Activated T-helper 1 cell treated with anti-CD3 and anti-CD28 coated beads, Interleukin-12 subunit alpha, Interleukin-12 subunit beta, Interleukin-2, Interleukin-4 antibody, amounts not matched to agents 30 ng/mL and 10 ng/mL and 1 ng/mL, durations not matched to agents 14 hours and 24 hours and 36 hours (primary cell): ENCODE measurements at regions of chr3 and their contacts with region 1.

Region 1: DNA sequence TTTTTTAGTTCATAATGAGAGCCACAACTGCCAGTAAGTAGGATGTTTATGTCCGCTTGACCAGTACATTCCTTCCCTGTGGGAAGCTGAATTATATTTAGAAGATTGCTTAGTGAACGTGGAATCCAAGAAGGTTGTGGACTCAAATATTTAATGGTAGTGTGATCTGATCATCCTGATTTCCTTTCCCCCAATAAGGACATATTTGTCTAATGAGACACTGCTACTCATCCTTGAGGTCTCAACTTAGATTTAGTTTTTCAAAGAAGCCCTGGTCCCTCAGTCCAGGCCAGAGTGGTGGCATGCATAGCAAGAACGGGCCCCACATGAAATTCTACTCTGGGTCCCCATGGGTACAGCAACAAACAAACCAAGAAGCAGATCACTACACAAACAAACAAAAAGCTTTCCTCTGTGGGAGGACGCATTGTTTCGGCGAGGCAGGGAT is 60.8 kb downstream of the USP13 start:
- DNase-seq: no peak
- H3K4me3 Mint-ChIP-seq: no peak overlapping the region
- H3K27ac Mint-ChIP-seq: no peak overlapping the region
- H3K4me1 Mint-ChIP-seq: no peaks in the 10 kb centered on the region
- H3K27me3 Mint-ChIP-seq: no peaks in the 10 kb centered on the region

Region 2: DNA sequence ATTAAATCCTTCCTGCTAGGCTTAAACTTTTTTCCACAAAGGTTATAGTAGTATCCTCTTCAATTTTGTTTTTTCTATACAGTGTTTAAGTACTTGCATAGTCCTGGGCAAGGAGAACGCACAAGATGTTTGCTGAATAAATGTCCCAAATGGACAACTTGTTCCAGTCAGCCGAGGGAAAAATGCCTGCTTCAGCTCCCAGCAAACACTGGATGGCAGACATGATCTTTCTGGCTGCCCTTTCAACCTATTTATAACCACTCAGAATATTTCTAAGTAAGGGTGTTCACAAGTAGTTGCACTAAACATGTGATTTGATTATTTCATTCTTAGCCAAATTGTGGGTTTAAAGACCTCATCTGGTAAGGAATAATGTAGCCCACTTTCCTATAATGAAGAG is 292.2 kb before region 1 on chr3:
- intact Hi-C with region 1: no loop called
- DNase-seq: no peak
- H3K4me3 Mint-ChIP-seq: no peak overlapping the region
- H3K27ac Mint-ChIP-seq: no peak overlapping the region
- H3K4me1 Mint-ChIP-seq: no peaks in the 10 kb centered on the region
- H3K27me3 Mint-ChIP-seq: no peaks in the 10 kb centered on the region

Region 3: GRCh38 chr3:179700705-179701104 is 13.0 kb before region 1 on chr3:
- intact Hi-C with region 1: loop called (anchors 1 kb)
- DNase-seq: no peak
- H3K4me3 Mint-ChIP-seq: no peak overlapping the region
- H3K27ac Mint-ChIP-seq: no peak overlapping the region
- H3K4me1 Mint-ChIP-seq: peaks cover 12% of the 10 kb centered on the region
- H3K27me3 Mint-ChIP-seq: no peaks in the 10 kb centered on the region

Region 4: GRCh38 chr3:179760944-179761343 is 47.3 kb after region 1 on chr3:
- intact Hi-C with region 1: no loop called
- DNase-seq: no peak
- H3K4me3 Mint-ChIP-seq: no peak overlapping the region
- H3K27ac Mint-ChIP-seq: no peak overlapping the region
- H3K4me1 Mint-ChIP-seq: no peaks in the 10 kb centered on the region
- H3K27me3 Mint-ChIP-seq: no peaks in the 10 kb centered on the region

Region 5: DNA sequence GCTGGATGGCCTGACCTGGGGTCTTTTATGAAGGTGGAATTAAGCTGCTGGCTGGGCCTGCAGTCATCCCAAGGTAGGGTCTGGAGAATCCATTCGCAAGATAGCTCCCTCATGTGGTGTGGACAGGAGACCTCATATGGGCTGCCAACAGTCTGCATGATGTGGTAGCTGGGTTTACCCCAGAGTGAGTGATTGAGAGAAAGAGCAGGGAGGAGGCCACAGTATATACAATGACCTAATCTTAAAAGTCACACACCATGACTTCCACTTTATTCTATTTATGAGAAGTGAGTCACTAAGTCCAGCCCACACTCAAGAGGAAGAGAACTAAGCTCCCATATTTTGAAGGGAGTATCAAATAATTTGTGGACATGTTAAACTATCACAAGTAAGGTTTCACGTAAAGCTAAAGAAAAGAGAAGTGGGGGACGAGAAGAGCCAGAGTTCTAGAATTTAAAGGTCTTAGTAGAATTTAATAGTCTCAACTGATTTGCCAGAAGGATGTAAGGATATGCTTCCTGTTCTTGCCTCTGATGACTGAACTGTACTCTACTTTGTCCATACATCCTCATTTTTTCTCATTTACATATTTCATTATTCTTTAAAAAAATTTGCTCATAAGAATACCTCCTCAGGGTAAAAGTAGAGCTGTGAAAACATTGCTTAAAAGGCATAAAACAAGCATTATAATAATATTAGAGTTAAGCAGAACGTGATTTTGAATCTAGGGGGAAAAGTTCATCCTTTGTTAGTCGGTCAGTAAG is 138.7 kb after region 1 on chr3:
- intact Hi-C with region 1: no loop called
- DNase-seq: no peak
- H3K4me3 Mint-ChIP-seq: no peak overlapping the region
- H3K27ac Mint-ChIP-seq: no peak overlapping the region
- H3K4me1 Mint-ChIP-seq: no peaks in the 10 kb centered on the region
- H3K27me3 Mint-ChIP-seq: peaks cover 4% of the 10 kb centered on the region

Region 6: GRCh38 chr3:180063810-180064209 is 350.1 kb after region 1 on chr3:
- intact Hi-C with region 1: no loop called
- DNase-seq: no peak
- H3K4me3 Mint-ChIP-seq: no peak overlapping the region
- H3K27ac Mint-ChIP-seq: no peak overlapping the region
- H3K4me1 Mint-ChIP-seq: no peaks in the 10 kb centered on the region
- H3K27me3 Mint-ChIP-seq: peaks cover 2% of the 10 kb centered on the region